Right ventricle myocardium inferior (tissue), 1 donor: ENCODE measurements at regions of chr10 and their contacts with region 1.

Region 1: GRCh38 chr10:104650072-104650471 is 9.0 kb downstream of the SORCS3 start:
- DNase-seq: no peak
- ATAC-seq: no peak

Region 2: GRCh38 chr10:104777086-104777799 is 127.2 kb after region 1 on chr10:
- intact Hi-C with region 1: loop called (anchors 2 kb)
- DNase-seq: no peak
- ATAC-seq: no peak

Region 3: DNA sequence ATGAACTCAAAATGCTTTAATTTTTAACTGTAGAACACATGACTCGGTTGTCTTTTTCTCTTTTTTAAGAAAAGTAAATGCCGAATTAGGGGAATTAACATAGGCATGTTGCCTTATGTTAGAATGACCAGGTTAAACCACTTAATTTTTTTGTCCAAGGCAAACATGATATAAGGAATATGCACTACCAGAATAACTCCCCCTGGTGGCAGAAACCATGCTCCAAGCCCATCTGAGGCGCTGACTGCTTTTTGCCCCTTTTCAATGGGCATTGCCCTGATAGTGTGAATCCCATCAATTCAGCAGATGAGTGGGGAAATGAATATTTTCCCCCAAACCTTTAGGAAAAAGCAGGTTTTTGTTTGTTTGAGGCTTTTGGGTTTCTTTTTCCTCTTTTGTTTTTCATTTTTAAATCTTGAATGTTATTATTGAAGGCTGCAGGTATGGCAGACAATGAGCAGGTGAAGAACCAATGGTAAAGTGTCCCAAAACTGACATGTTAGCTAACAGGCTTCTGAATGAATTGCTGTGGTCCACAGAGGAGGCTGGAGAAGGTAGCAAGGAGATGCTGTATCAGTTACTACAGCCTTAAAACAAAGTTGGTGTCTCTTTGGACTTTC is 275.3 kb after region 1 on chr10:
- intact Hi-C with region 1: loop called (anchors 5 kb)
- DNase-seq: no peak
- ATAC-seq: no peak